ENCODE measurements at regions of chr22 and their contacts with region 1.

Region 1: DNA sequence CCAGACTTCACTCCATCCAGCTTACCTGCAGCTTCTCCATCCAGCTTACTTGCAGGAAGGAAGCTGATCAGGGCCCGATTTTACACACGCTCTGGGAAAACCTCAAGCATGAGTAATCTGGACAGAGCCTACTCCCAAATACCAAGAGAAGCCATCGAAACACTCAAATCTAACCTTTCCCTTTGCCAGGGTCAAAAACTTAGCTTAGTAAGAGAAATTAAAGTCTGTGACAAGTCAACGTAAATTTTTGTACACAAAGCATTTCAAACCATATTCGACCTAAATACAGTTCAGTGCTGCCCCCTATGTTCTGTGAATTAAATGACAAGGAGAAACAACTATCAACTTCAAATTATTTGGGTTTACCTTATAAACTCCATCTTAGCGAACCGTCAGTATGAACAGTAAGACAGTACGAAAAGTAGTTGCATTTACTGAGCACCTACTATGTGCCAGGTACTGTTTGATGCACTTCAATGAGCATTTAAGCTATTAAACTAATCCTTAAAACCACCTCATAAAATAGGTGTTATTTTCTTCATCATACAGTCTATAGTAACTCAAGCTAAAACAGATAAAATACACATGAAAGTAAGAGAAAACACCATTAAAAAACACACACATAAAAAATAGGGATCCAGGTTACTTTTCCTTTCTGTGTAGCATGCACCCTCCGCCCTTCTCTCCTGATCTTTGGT is 36.9 kb downstream of the ARFGAP3 start:
- DNase-seq: peak; percentile 23 to 40
- H3K4me3 ChIP-seq: no peak overlapping the region
- H3K27ac ChIP-seq: no peak overlapping the region
- H3K4me1 ChIP-seq: no peaks in the 10 kb centered on the region; the same call in 1 of the 2 replicates
- H3K27me3 ChIP-seq: no peaks in the 10 kb centered on the region
- CTCF ChIP-seq: peak; percentile 85

Region 2: GRCh38 chr22:42533638-42533977 is 286.6 kb before region 1 on chr22:
- CTCF ChIA-PET with region 1: no interaction called
- POLR2A ChIA-PET with region 1: no interaction called
- intact Hi-C with region 1: loop called (anchors 5 kb)
- DNase-seq: no peak
- H3K4me3 ChIP-seq: peak overlapping the region; percentile 57; the same call in 1 of the 2 replicates
- H3K27ac ChIP-seq: no peak overlapping the region
- H3K4me1 ChIP-seq: peaks cover 40% of the 10 kb centered on the region
- H3K27me3 ChIP-seq: no peaks in the 10 kb centered on the region
- CTCF ChIP-seq: no peak

Region 3: DNA sequence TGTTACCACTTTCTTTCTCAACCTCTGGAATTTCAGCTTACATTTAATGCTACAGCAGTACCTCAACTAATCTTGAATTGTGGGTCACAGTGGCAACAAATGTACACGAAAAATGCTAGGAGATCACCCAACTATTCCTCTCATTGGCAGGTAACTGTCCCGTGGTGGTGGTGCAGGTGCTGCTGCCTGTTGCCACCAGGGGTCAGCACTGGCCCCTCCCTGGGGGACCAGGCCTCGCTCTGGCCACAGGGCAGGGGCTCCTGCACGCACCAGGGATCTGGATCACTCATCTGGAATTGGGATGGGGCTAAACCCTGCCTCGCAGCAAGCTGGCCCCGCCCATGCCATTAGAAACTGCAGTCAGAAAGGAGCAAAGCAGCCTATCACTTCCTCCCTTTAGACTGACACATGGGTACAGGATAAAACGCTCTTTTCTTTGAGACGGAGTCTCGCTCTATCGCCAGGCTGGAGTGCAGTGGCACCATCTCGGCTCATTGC is 198.7 kb before region 1 on chr22:
- CTCF ChIA-PET with region 1: interaction called, 6 read pairs
- POLR2A ChIA-PET with region 1: no interaction called
- intact Hi-C with region 1: loop called (anchors 1 kb)
- DNase-seq: peak in 1 of 2 experiments; percentile 70
- H3K4me3 ChIP-seq: no peak overlapping the region
- H3K27ac ChIP-seq: no peak overlapping the region
- H3K4me1 ChIP-seq: peaks cover 4% of the 10 kb centered on the region; the same call in 1 of the 2 replicates
- H3K27me3 ChIP-seq: no peaks in the 10 kb centered on the region
- CTCF ChIP-seq: peak; percentile 92

Region 4: GRCh38 chr22:42662114-42663021 is 157.8 kb before region 1 on chr22:
- CTCF ChIA-PET with region 1: no interaction called
- POLR2A ChIA-PET with region 1: interaction called, 3 read pairs
- intact Hi-C with region 1: loop called (anchors 1 kb)
- DNase-seq: peak in 1 of 2 experiments; percentile 71
- H3K4me3 ChIP-seq: peak overlapping the region; percentile 60
- H3K27ac ChIP-seq: no peak overlapping the region
- H3K4me1 ChIP-seq: no peaks in the 10 kb centered on the region
- H3K27me3 ChIP-seq: no peaks in the 10 kb centered on the region
- CTCF ChIP-seq: peak; percentile 91

Region 5: GRCh38 chr22:43088979-43089717 is 268.9 kb after region 1 on chr22 and contains the start of gene TTLL1:
- CTCF ChIA-PET with region 1: interaction called, 15 read pairs
- POLR2A ChIA-PET with region 1: no interaction called
- intact Hi-C with region 1: no loop called
- DNase-seq: peak; percentile 85 to 96
- H3K4me3 ChIP-seq: peak within 1 kb of the TSS; percentile 93
- H3K27ac ChIP-seq: peak within 1 kb of the TSS; percentile 70
- H3K4me1 ChIP-seq: peaks cover 7% of the 10 kb centered on the region
- H3K27me3 ChIP-seq: no peaks in the 10 kb centered on the region
- CTCF ChIP-seq: no peak; the same call in 1 of the 2 replicates
- total RNA-seq, gene TTLL1: 7.8 and 11.2 TPM in 2 replicates